Aorta (tissue), 5 donors: ENCODE measurements at regions of chr14 and their contacts with region 1.

Region 1: DNA sequence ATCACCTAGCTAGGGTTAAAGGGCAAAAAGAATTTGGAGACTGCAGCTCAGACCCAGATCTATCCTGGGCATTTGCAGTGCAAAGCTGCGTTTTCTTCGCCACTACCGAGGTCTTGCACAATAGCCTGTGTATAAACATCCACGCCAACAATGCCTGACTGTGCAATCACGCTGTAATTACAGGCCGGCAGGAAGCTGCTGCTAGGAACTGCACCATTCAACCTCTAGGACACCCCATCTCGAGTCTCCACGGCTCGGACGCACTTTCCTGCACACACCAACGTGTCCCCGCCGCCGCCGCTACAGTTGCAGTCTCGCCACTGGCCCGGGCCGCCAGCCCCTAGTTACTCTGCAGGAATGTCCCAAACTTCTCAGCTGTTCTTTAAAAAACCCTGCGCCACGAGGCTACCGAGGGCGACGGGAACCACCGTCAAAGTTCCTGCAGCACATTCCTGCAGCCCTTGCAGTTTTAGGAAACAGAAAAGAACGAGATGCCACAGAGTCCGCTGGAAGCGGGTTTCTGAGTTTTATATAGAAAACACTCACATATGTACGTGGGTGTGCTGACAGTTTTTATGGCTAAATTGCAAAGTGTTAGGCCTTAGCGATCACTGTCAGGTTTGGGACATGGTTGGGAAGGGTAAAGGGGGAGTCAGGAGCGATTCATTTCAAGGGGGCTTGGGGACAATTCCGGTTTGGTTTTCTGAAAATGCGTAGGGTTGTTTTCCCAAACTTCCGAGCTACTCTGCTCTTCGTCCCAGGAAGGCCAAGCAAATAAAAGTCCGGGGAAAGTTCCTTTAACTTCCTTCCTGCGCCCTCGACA is 65.5 kb upstream of the PTGR2 start:
- DNase-seq: peak; percentile 85 to 90
- ATAC-seq: peak; percentile 84
- H3K4me3 ChIP-seq: peak overlapping the region; percentile 90 to 96
- H3K27ac ChIP-seq: peak overlapping the region; percentile 95 to 99
- H3K4me1 ChIP-seq: peaks cover 4 to 7% of the 10 kb centered on the region in 2 donors
- H3K27me3 ChIP-seq: no peaks in the 10 kb centered on the region

Region 2: GRCh38 chr14:73713803-73714655 is 72.1 kb before region 1 on chr14 and contains the start of gene PNMA1:
- intact Hi-C with region 1: no loop called
- DNase-seq: peak; percentile 92 to 95
- ATAC-seq: peak; percentile 92
- H3K4me3 ChIP-seq: peak within 1 kb of the TSS; percentile 59 to 89
- H3K27ac ChIP-seq: peak within 1 kb of the TSS; percentile 37 to 87
- H3K4me1 ChIP-seq: no peaks in the 10 kb centered on the region
- H3K27me3 ChIP-seq: no peaks in the 10 kb centered on the region
- total RNA-seq, gene PNMA1: 36.7 to 45.5 TPM

Region 3: GRCh38 chr14:73728717-73729330 is 57.3 kb before region 1 on chr14:
- intact Hi-C with region 1: loop called in 1 of 2 experiments (anchors 5 kb)
- DNase-seq: peak; percentile 91 to 93
- ATAC-seq: peak; percentile 74
- H3K4me3 ChIP-seq: no peak overlapping the region
- H3K27ac ChIP-seq: peak overlapping the region in 1 of 2 donors; percentile 52
- H3K4me1 ChIP-seq: no peaks in the 10 kb centered on the region
- H3K27me3 ChIP-seq: no peaks in the 10 kb centered on the region

Region 4: GRCh38 chr14:73753959-73754882 is 31.9 kb before region 1 on chr14:
- intact Hi-C with region 1: loop called (anchors 5 kb)
- DNase-seq: peak in 1 of 2 donors; percentile 79
- ATAC-seq: no peak
- H3K4me3 ChIP-seq: no peak overlapping the region
- H3K27ac ChIP-seq: peak overlapping the region; percentile 39 to 99
- H3K4me1 ChIP-seq: peaks cover 0 to 15% of the 10 kb centered on the region in 2 donors
- H3K27me3 ChIP-seq: no peaks in the 10 kb centered on the region

Region 5: DNA sequence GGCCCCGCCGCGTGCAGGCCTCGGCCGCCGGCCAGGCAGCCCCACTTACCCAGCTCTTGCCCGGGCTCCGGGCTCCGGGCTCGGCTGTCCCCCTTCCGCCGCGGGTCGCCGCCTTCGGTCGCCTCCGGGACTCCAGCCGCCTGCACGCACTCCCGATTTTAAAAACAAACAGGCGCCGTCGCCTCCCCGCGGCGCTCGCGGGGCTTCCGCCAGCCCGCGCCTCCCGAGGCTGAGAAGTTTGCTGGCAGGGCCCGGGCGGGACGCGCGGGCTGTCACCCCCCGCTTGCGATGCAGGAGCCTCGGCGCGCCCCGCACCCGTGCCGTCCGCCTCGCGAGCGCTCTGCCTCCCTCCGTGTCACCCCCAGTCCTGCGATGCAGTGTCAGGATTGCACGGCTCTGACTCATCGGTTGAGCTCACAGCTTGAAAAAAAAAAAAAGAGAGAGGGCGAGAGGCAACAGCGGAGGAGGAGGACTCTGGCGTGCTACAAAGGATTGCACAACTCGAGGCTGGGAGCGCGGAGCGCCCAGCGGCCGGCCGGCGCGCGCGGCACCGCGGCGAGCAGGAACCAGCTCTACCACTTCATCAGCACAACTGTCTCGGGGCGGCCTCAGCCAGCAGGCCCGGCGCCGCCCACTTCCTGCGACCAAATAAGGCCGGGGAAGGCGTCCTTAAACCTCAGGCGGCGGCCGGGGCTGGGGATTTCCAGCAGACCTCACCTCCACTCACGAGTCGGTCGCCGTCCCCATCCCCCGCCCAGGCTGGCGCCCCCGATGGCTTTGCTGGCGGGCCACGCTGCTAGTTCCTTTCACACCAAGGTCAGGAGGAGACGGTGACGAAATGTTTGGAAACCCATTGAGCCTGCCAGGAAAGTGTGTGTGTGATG is 26.1 kb before region 1 on chr14:
- intact Hi-C with region 1: loop called (anchors 2 kb)
- DNase-seq: peak; percentile 98 to 99
- ATAC-seq: peak; percentile 91
- H3K4me3 ChIP-seq: peak overlapping the region; percentile 80 to 83
- H3K27ac ChIP-seq: peak overlapping the region; percentile 83 to 92
- H3K4me1 ChIP-seq: no peaks in the 10 kb centered on the region
- H3K27me3 ChIP-seq: no peaks in the 10 kb centered on the region